Caco-2 (cell line): ENCODE measurements at regions of chr10 and their contacts with region 1.

Region 1: DNA sequence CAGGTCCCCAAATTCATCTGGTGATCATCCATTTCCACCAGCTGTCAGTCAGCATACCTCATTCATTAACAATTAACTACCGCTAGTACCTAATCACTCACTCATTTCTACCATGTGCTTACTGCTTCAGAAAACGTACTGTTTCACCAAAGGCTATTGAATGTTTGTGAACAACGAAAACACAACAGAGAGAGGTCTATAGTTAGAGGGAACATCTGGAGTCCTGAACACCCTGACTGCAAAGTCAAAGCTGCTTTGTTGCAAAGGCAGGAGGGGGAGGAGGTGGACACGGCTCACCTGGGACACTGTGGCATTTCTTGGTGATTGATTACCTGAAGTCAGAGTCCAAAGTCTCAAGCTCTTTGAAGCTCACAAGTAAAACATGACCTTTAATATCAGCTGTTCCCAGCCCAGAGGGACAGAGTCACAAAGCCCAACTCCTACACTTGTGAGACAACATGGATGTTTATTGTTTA is 342.3 kb upstream of the ADARB2 start:
- DNase-seq: peak; percentile 90 to 91
- H3K4me3 ChIP-seq: no peak overlapping the region
- H3K4me3 Mint-ChIP-seq: peak overlapping the region; percentile 72
- H3K27ac Mint-ChIP-seq: peak overlapping the region; percentile 97
- H3K4me1 ChIP-seq: peaks cover 36% of the 10 kb centered on the region
- H3K4me1 Mint-ChIP-seq: peaks cover 45% of the 10 kb centered on the region
- H3K27me3 ChIP-seq: no peaks in the 10 kb centered on the region
- H3K27me3 Mint-ChIP-seq: no peaks in the 10 kb centered on the region
- CTCF ChIP-seq: no peak

Region 2: GRCh38 chr10:2054728-2055127 is 24.9 kb before region 1 on chr10:
- CTCF ChIA-PET with region 1: no interaction called
- POLR2A ChIA-PET with region 1: interaction called, 9 read pairs
- intact Hi-C with region 1: loop called (anchors 1 kb)
- DNase-seq: no peak
- H3K4me3 ChIP-seq: no peak overlapping the region
- H3K4me3 Mint-ChIP-seq: no peak overlapping the region
- H3K27ac Mint-ChIP-seq: no peak overlapping the region
- H3K4me1 ChIP-seq: peaks cover 27% of the 10 kb centered on the region
- H3K4me1 Mint-ChIP-seq: peaks cover 14% of the 10 kb centered on the region
- H3K27me3 ChIP-seq: no peaks in the 10 kb centered on the region
- H3K27me3 Mint-ChIP-seq: no peaks in the 10 kb centered on the region
- CTCF ChIP-seq: no peak

Region 3: GRCh38 chr10:2111941-2112340 is 32.3 kb after region 1 on chr10:
- CTCF ChIA-PET with region 1: no interaction called
- POLR2A ChIA-PET with region 1: no interaction called
- intact Hi-C with region 1: loop called (anchors 1 kb)
- DNase-seq: peak; percentile 55 to 75
- H3K4me3 ChIP-seq: no peak overlapping the region
- H3K4me3 Mint-ChIP-seq: no peak overlapping the region
- H3K27ac Mint-ChIP-seq: no peak overlapping the region
- H3K4me1 ChIP-seq: peaks cover 7% of the 10 kb centered on the region
- H3K4me1 Mint-ChIP-seq: peaks cover 9% of the 10 kb centered on the region
- H3K27me3 ChIP-seq: no peaks in the 10 kb centered on the region
- H3K27me3 Mint-ChIP-seq: no peaks in the 10 kb centered on the region
- CTCF ChIP-seq: no peak